ENCODE measurements at regions of chr7 and their contacts with region 1.

Region 1: GRCh38 chr7:38411404-38411803 is 138.0 kb upstream of the TARP start:
- DNase-seq: no peak
- CTCF ChIP-seq: peak; percentile 34

Region 2: GRCh38 chr7:38660427-38661099 is 249.2 kb after region 1 on chr7:
- in situ Hi-C with region 1: loop called (anchors 10 kb)
- DNase-seq: peak; percentile 57
- CTCF ChIP-seq: peak; percentile 88